Left cardiac atrium (tissue), 4 donors: ENCODE measurements at regions of chr6 and their contacts with region 1.

Region 1: GRCh38 chr6:77457720-77458349 is 5.5 kb downstream of the HTR1B start:
- DNase-seq: peak; percentile 69
- ATAC-seq: peak; percentile 92 to 93

Region 2: DNA sequence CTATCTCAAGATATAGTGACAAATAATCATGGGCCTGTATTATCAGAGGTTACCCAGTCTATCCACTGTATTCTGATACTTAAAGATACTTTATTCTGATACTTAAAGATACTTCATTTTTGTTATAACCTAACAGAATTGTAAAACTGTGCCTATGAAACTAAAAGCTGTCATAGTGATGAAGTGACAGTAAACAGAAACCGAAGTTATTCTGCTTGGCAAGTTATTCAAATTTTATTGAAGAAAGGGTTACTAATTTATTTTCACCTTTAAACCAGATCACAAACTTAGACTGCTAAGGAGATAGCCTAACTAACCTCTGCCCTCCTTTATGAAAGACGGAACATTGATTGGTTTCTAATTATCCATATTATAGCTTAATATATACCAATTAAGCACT is 780.8 kb before region 1 on chr6:
- intact Hi-C with region 1: loop called in 1 of 2 experiments (anchors 5 kb)
- DNase-seq: no peak
- ATAC-seq: no peak